ENCODE measurements at regions of chr7 and their contacts with region 1.

Region 1: GRCh38 chr7:45416846-45417245 is 157.3 kb upstream of the ADCY1 start:
- DNase-seq: no peak
- H3K4me3 Mint-ChIP-seq: no peak overlapping the region
- H3K27ac Mint-ChIP-seq: no peak overlapping the region
- H3K4me1 Mint-ChIP-seq: peaks cover 6% of the 10 kb centered on the region
- H3K27me3 Mint-ChIP-seq: peaks cover 4% of the 10 kb centered on the region

Region 2: DNA sequence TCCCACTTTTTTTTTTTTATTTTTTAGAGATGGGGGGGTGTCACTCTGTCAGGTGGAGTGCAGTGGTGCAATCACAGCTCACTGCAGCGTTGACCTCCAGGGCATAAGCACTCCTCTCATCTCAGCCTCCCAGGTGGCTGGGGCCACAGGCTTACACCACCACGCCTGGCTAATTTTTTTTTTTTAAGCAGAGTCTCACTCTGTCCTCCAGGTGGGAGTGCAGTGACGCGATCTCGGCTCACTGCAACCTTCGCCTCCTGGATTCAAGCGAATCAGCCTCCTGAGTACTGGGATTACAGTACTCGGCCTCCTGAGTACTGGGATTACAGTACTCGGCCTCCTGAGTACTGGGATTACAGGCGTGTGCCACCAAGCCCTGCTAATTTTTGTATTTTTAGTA is 644.0 kb before region 1 on chr7:
- intact Hi-C with region 1: no loop called
- DNase-seq: no peak
- H3K4me3 Mint-ChIP-seq: no peak overlapping the region
- H3K27ac Mint-ChIP-seq: no peak overlapping the region
- H3K4me1 Mint-ChIP-seq: peaks cover 16% of the 10 kb centered on the region
- H3K27me3 Mint-ChIP-seq: peaks cover 4% of the 10 kb centered on the region

Region 3: GRCh38 chr7:45347804-45348412 is 68.9 kb before region 1 on chr7:
- intact Hi-C with region 1: no loop called
- DNase-seq: no peak
- H3K4me3 Mint-ChIP-seq: no peak overlapping the region
- H3K27ac Mint-ChIP-seq: no peak overlapping the region
- H3K4me1 Mint-ChIP-seq: no peaks in the 10 kb centered on the region
- H3K27me3 Mint-ChIP-seq: no peaks in the 10 kb centered on the region

Region 4: GRCh38 chr7:45446195-45446944 is 29.5 kb after region 1 on chr7:
- intact Hi-C with region 1: loop called (anchors 1 kb)
- DNase-seq: no peak
- H3K4me3 Mint-ChIP-seq: no peak overlapping the region
- H3K27ac Mint-ChIP-seq: no peak overlapping the region
- H3K4me1 Mint-ChIP-seq: peaks cover 15% of the 10 kb centered on the region
- H3K27me3 Mint-ChIP-seq: no peaks in the 10 kb centered on the region

Region 5: GRCh38 chr7:45543461-45543860 is 126.6 kb after region 1 on chr7:
- intact Hi-C with region 1: loop called (anchors 10 kb)
- DNase-seq: no peak
- H3K4me3 Mint-ChIP-seq: no peak overlapping the region
- H3K27ac Mint-ChIP-seq: no peak overlapping the region
- H3K4me1 Mint-ChIP-seq: peaks cover 2% of the 10 kb centered on the region
- H3K27me3 Mint-ChIP-seq: no peaks in the 10 kb centered on the region